Endothelial cell of umbilical vein (primary cell): ENCODE measurements at regions of chr7 and their contacts with region 1.

Region 1: DNA sequence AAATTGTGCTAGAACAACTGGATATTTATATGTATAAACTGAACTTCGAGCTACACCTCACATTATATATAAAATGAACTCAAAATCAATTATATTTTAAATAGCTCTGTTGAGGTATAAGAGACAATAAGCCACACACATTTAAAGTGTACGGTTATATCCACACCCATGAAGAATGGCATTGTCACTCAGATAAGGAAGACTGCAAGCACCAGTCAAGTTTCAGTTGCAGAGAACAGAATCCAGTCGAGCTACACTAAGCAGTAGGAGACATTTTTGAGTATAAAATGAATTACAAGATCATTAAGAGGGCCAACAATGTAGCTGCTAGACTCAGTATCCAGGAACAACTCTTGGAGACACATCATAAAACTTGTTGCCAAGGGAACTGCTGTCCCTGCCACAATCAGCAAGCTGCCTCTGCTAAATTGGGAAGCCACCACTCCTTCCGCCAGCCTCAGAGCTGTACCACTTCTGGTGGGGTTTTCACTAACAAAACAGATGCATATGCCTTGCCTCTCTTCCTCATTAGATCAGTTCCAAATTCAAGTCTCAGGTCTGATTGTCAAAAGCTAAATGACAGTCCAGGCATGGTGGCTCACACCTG is 19.6 kb upstream of the GPNMB start:
- DNase-seq: no peak
- H3K4me3 ChIP-seq: no peak overlapping the region
- H3K27ac ChIP-seq: no peak overlapping the region
- H3K4me1 ChIP-seq: no peaks in the 10 kb centered on the region
- H3K27me3 ChIP-seq: peaks cover 0 to 2% of the 10 kb centered on the region in 2 experiments
- CTCF ChIP-seq: no peak
- POLR2A ChIP-seq: no peak

Region 2: GRCh38 chr7:22876986-22877729 is 349.8 kb before region 1 on chr7:
- CTCF ChIA-PET with region 1: no interaction called
- POLR2A ChIA-PET with region 1: no interaction called
- dilution Hi-C with region 1: no loop called
- intact Hi-C with region 1: no loop called
- DNase-seq: no peak
- H3K4me3 ChIP-seq: no peak overlapping the region
- H3K27ac ChIP-seq: no peak overlapping the region
- H3K4me1 ChIP-seq: no peaks in the 10 kb centered on the region
- H3K27me3 ChIP-seq: no peaks in the 10 kb centered on the region
- CTCF ChIP-seq: no peak
- POLR2A ChIP-seq: no peak

Region 3: DNA sequence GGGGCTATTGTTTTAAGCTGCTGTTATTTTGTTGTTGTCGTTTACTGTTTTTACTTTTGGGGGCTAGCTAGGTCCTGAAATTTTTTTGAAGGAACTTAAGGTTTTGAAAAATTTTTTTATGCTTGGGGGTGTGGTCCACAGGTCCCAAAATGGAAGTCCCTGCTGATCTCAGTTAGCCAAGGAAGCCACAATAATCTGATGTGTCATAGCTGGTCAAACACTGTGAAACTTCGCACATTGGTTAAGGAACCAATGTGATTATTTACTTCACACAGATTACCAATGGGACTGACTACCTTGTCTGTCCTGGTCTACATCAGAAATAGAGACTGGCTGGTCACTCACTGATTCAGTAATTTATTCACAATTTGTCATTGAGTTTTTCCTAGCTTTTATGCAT is 183.5 kb before region 1 on chr7:
- CTCF ChIA-PET with region 1: no interaction called
- POLR2A ChIA-PET with region 1: no interaction called
- dilution Hi-C with region 1: no loop called
- intact Hi-C with region 1: no loop called
- DNase-seq: no peak
- H3K4me3 ChIP-seq: no peak overlapping the region
- H3K27ac ChIP-seq: no peak overlapping the region
- H3K4me1 ChIP-seq: no peaks in the 10 kb centered on the region
- H3K27me3 ChIP-seq: no peaks in the 10 kb centered on the region
- CTCF ChIP-seq: no peak
- POLR2A ChIP-seq: no peak

Region 4: DNA sequence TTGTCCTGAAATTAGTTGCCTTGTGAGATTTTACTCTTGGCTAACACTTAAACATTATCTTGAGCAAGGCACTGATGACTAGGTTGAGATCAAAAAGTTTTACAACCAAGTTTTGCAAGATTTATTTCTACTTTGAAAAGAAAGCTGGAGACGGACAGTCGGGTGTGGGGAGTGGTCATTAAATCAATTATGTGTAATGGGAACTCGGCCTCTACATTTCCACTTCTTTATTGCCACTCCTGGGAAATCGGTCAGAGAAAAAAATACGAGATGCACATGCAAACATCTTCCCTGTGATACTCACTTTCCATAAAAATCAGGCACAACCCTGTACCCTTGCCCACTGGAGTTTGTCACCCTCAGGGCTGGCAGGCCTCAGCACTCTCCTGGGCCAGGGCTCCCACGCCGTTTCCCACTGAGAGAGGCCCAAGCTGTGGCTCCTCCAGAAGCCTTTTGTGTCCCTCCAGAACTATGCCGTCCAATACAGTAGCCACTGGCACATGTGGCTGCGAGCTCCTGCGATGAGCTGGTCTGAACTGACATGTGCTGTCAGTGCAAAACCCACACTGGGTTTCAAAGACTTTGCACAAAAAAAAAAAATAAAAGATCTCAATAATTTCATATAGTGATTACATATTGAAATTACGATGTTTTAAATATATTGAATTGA is 12.2 kb after region 1 on chr7:
- CTCF ChIA-PET with region 1: interaction called, 10 read pairs
- POLR2A ChIA-PET with region 1: no interaction called
- dilution Hi-C with region 1: no loop called
- intact Hi-C with region 1: no loop called
- DNase-seq: no peak
- H3K4me3 ChIP-seq: no peak overlapping the region
- H3K27ac ChIP-seq: no peak overlapping the region
- H3K4me1 ChIP-seq: no peaks in the 10 kb centered on the region
- H3K27me3 ChIP-seq: peaks cover 0 to 11% of the 10 kb centered on the region in 2 experiments
- CTCF ChIP-seq: no peak
- POLR2A ChIP-seq: no peak